B cell (primary cell): ENCODE measurements at regions of chr10 and their contacts with region 1.

Region 1: GRCh38 chr10:14670551-14671240 is 104.0 kb downstream of the FAM107B start:
- DNase-seq: no peak
- ATAC-seq: no peak
- H3K4me3 ChIP-seq: no peak overlapping the region
- H3K4me3 Mint-ChIP-seq: no peak overlapping the region
- H3K27ac ChIP-seq: no peak overlapping the region
- H3K27ac Mint-ChIP-seq: peak overlapping the region; percentile 55
- H3K4me1 ChIP-seq: peaks cover 16 to 18% of the 10 kb centered on the region in 2 donors
- H3K4me1 Mint-ChIP-seq: peaks cover 27% of the 10 kb centered on the region
- H3K27me3 ChIP-seq: no peaks in the 10 kb centered on the region
- H3K27me3 Mint-ChIP-seq: no peaks in the 10 kb centered on the region
- CTCF ChIP-seq: no peak

Region 2: DNA sequence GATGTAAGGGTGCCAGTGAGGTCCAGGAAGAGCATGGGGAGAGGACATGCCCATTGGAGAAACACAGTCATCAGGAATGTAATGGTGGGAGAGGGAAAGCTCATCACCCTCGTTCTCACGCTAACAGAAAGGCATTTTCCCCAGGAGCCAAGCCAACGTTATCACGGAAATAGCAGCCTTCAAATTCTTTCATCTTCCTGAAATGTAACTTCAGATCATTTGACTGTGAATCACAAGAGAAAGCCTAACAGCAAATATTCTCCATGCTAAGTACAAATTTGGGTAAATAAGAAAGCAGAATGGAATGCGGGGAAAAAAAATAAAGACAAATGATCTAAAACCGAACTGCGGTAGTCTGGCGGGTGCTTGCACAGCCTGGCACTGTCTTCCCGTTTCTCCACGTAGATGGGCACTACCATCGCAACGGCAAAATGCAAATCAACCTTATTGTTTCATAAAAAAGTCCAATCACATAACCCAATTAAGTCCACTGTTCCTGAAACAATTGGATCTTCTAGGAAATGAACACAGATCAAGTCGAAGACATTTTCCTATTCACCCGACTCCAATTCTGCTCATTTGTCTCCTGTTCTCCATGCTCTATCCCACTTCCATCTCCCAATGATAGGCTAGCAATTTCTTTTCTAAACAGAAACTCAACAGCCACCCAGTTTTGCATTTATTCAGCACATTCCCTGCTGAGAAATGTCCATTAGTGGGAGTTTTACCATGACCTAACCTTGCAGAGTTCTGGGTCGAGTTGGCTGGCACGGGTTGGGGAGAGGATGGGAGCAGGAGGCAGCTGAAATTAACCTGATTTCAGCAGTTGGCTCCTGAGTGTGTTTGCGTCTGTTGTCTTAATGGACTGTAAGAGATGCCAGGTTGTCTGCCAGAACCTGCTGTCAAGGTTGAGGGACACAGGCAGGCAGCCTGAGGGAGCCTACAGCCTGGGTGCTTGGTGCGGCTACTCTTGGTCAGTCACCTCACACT is 265.3 kb before region 1 on chr10:
- CTCF ChIA-PET with region 1: no interaction called
- POLR2A ChIA-PET with region 1: no interaction called
- intact Hi-C with region 1: no loop called
- DNase-seq: no peak
- ATAC-seq: no peak
- H3K4me3 ChIP-seq: no peak overlapping the region
- H3K4me3 Mint-ChIP-seq: no peak overlapping the region
- H3K27ac ChIP-seq: no peak overlapping the region
- H3K27ac Mint-ChIP-seq: no peak overlapping the region
- H3K4me1 ChIP-seq: peaks cover 5 to 17% of the 10 kb centered on the region in 2 donors
- H3K4me1 Mint-ChIP-seq: peaks cover 21% of the 10 kb centered on the region
- H3K27me3 ChIP-seq: peaks cover 0 to 14% (median 4%) of the 10 kb centered on the region in 4 experiments
- H3K27me3 Mint-ChIP-seq: peaks cover 46% of the 10 kb centered on the region
- CTCF ChIP-seq: no peak

Region 3: DNA sequence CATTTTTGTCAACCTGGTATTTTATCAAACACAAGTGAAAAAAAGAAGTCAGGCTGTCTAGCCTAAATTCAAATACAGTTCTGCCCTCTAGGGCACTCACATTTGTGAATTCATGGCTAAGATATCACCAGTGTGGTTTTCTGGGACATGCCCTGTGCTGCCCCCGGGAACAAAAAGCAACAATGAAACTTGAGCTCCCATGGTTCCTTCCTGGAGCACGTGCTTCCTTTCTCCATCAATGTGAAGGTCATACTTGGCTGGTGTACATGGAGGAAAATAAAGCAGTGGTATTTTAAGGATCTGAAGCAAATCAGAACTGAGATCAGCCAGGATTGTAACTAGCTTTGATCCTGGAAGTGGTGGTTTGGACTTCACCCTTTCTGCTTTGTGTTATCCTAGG is 211.0 kb before region 1 on chr10:
- CTCF ChIA-PET with region 1: no interaction called
- POLR2A ChIA-PET with region 1: no interaction called
- intact Hi-C with region 1: no loop called
- DNase-seq: no peak
- ATAC-seq: no peak
- H3K4me3 ChIP-seq: no peak overlapping the region
- H3K4me3 Mint-ChIP-seq: no peak overlapping the region
- H3K27ac ChIP-seq: no peak overlapping the region
- H3K27ac Mint-ChIP-seq: no peak overlapping the region
- H3K4me1 ChIP-seq: no peaks in the 10 kb centered on the region
- H3K4me1 Mint-ChIP-seq: no peaks in the 10 kb centered on the region
- H3K27me3 ChIP-seq: peaks cover 0 to 5% (median 2%) of the 10 kb centered on the region in 4 experiments
- H3K27me3 Mint-ChIP-seq: peaks cover 44% of the 10 kb centered on the region
- CTCF ChIP-seq: no peak

Region 4: GRCh38 chr10:14801723-14802122 is 131.0 kb after region 1 on chr10:
- CTCF ChIA-PET with region 1: no interaction called
- POLR2A ChIA-PET with region 1: no interaction called
- intact Hi-C with region 1: loop called (anchors 5 kb)
- DNase-seq: no peak
- ATAC-seq: no peak
- H3K4me3 ChIP-seq: no peak overlapping the region
- H3K4me3 Mint-ChIP-seq: no peak overlapping the region
- H3K27ac ChIP-seq: no peak overlapping the region
- H3K27ac Mint-ChIP-seq: peak overlapping the region; percentile 12
- H3K4me1 ChIP-seq: peaks cover 25 to 26% of the 10 kb centered on the region in 2 donors
- H3K4me1 Mint-ChIP-seq: peaks cover 35% of the 10 kb centered on the region
- H3K27me3 ChIP-seq: no peaks in the 10 kb centered on the region
- H3K27me3 Mint-ChIP-seq: no peaks in the 10 kb centered on the region
- CTCF ChIP-seq: no peak